PC-9 (cell line): ENCODE measurements at regions of chr1 and their contacts with region 1.

Region 1: GRCh38 chr1:115275212-115275611 is 62.8 kb downstream of the NGF start:
- DNase-seq: no peak
- H3K4me3 ChIP-seq: no peak overlapping the region
- H3K27ac ChIP-seq: no peak overlapping the region
- H3K4me1 ChIP-seq: no peaks in the 10 kb centered on the region
- H3K27me3 ChIP-seq: no peaks in the 10 kb centered on the region
- CTCF ChIP-seq: peak; percentile 74

Region 2: GRCh38 chr1:115133440-115133839 is 141.8 kb before region 1 on chr1:
- CTCF ChIA-PET with region 1: no interaction called
- POLR2A ChIA-PET with region 1: no interaction called
- intact Hi-C with region 1: no loop called
- DNase-seq: no peak
- H3K4me3 ChIP-seq: no peak overlapping the region
- H3K27ac ChIP-seq: no peak overlapping the region
- H3K4me1 ChIP-seq: peaks cover 39% of the 10 kb centered on the region
- H3K27me3 ChIP-seq: no peaks in the 10 kb centered on the region
- CTCF ChIP-seq: no peak

Region 3: DNA sequence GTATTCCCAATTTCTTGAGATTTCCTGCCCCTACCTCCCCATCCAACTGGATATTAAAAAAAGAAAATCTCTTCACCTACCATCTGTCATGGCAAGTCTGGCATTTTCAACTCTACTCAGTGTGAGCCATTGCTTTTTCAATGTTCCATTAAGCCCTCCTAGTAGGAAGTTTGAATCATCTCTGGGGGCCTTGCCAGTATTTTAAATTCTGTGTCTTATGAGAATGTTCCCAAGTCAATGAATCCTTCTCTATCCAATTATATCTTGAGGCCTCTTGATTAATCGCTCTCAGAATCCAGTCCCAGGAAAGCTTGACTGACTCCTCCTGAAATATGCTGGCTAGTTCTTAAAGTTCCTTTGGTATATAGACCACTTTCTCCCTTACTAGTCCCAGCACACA is 28.7 kb before region 1 on chr1:
- CTCF ChIA-PET with region 1: no interaction called
- POLR2A ChIA-PET with region 1: no interaction called
- intact Hi-C with region 1: no loop called
- DNase-seq: no peak
- H3K4me3 ChIP-seq: no peak overlapping the region
- H3K27ac ChIP-seq: no peak overlapping the region
- H3K4me1 ChIP-seq: peaks cover 13% of the 10 kb centered on the region
- H3K27me3 ChIP-seq: no peaks in the 10 kb centered on the region
- CTCF ChIP-seq: no peak

Region 4: DNA sequence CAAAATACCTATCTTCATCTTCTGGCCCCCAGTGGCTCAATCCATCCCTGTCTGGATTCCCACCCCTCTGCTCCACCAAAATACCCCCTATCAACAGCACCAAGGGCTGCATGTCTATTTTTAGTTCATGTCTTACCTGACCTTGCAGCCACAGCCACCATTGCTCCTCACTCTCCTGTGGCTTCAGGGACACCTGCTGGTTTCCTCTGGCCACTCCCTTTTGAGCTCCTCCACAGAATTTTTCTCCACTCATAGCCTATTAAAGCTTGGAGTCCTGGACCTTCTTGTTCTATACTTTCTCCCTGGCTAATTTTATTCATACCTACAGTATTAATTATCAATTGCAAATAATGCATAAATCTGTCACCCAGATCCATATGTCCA is 188.1 kb after region 1 on chr1:
- CTCF ChIA-PET with region 1: interaction called, 4 read pairs
- POLR2A ChIA-PET with region 1: no interaction called
- intact Hi-C with region 1: loop called (anchors 1 kb)
- DNase-seq: peak in 1 of 2 experiments; percentile 56
- H3K4me3 ChIP-seq: no peak overlapping the region
- H3K27ac ChIP-seq: no peak overlapping the region
- H3K4me1 ChIP-seq: peaks cover 50% of the 10 kb centered on the region
- H3K27me3 ChIP-seq: no peaks in the 10 kb centered on the region
- CTCF ChIP-seq: peak; percentile 87